ENCODE measurements at regions of chr3 and their contacts with region 1.

Region 1: DNA sequence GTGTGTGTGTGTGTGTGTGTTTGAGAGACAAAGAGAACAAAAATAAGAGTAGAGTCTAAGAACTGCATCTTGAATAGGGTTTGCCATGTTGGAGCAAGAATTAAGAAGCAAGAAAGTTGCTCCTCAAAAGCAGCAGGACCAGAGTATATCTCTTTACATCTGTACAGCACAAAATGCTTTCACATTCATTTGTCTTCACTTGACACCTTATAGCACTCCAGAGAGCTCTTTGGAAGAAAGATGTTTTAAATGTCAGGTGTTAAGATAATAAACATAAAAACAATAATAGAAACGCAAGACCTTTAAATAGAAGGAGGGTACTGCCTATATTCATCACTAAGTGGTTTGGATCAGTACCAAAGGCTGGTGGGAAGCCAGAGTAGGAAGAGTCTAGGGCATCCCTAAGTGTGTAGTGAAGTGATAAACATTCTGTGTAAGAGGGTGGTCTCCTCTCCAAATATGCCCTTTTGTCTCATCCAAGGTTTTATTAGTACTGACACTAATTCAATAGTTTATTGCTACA is 19.1 kb upstream of the LSAMP start:
- DNase-seq: no peak
- H3K4me3 ChIP-seq: no peak overlapping the region
- H3K27ac ChIP-seq: no peak overlapping the region
- H3K4me1 ChIP-seq: no peaks in the 10 kb centered on the region
- H3K27me3 ChIP-seq: no peaks in the 10 kb centered on the region
- CTCF ChIP-seq: no peak
- EP300 ChIP-seq: no peak
- POLR2A ChIP-seq: no peak

Region 2: GRCh38 chr3:115836944-115837343 is 627.4 kb before region 1 on chr3:
- intact Hi-C with region 1: loop called (anchors 10 kb)
- DNase-seq: no peak
- H3K4me3 ChIP-seq: no peak overlapping the region
- H3K27ac ChIP-seq: no peak overlapping the region
- H3K4me1 ChIP-seq: peaks cover 0 to 15% (median 12%) of the 10 kb centered on the region in 4 donors
- H3K27me3 ChIP-seq: no peaks in the 10 kb centered on the region
- CTCF ChIP-seq: no peak
- EP300 ChIP-seq: no peak
- POLR2A ChIP-seq: no peak

Region 3: GRCh38 chr3:116263842-116264545 is 200.3 kb before region 1 on chr3:
- intact Hi-C with region 1: no loop called
- DNase-seq: no peak
- H3K4me3 ChIP-seq: no peak overlapping the region
- H3K27ac ChIP-seq: peak overlapping the region in 3 of 4 donors; percentile 53 to 76 (median 60)
- H3K4me1 ChIP-seq: peaks cover 0 to 44% (median 33%) of the 10 kb centered on the region in 4 donors
- H3K27me3 ChIP-seq: no peaks in the 10 kb centered on the region
- CTCF ChIP-seq: no peak
- EP300 ChIP-seq: no peak
- POLR2A ChIP-seq: no peak

Measured in sigmoid colon (tissue), 7 donors.